Right ventricle myocardium inferior (tissue), 1 donor: ENCODE measurements at regions of chr13 and their contacts with region 1.

Region 1: GRCh38 chr13:95385808-95386207 is 84.6 kb upstream of the ABCC4 start:
- DNase-seq: no peak
- ATAC-seq: no peak

Region 2: GRCh38 chr13:95301183-95301967 is 84.4 kb before region 1 on chr13 and contains the start of gene ABCC4:
- intact Hi-C with region 1: loop called (anchors 2 kb)
- DNase-seq: peak; percentile 83
- ATAC-seq: peak; percentile 87
- total RNA-seq, gene ABCC4: 4.0 TPM